ENCODE measurements at regions of chr5 and their contacts with region 1.

Region 1: DNA sequence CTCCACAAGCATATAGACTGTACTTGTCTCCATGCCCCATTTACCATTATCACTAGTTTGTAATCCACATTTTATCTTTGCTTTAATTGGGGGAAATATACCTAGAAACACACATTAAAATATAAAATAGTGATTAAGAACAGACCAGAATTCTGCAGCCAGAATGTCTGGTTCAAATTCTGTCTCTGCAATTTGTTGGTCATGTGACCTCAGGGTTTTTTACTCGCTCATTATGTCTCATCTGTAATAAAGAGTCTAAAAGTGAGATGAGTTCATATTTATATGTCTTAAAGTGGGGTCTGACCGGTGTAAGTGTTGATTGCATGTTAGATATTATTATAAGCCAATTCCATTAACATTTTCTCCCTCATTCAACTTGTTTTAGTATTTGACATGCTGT is 322.3 kb upstream of the CDH18 start:
- DNase-seq: no peak
- H3K4me3 ChIP-seq: no peak overlapping the region
- H3K27ac ChIP-seq: no peak overlapping the region
- H3K4me1 ChIP-seq: no peaks in the 10 kb centered on the region
- H3K27me3 ChIP-seq: no peaks in the 10 kb centered on the region
- CTCF ChIP-seq: no peak
- POLR2A ChIP-seq: no peak

Region 2: GRCh38 chr5:20032896-20033295 is 277.4 kb before region 1 on chr5:
- intact Hi-C with region 1: no loop called
- DNase-seq: no peak
- H3K4me3 ChIP-seq: no peak overlapping the region
- H3K27ac ChIP-seq: no peak overlapping the region
- H3K4me1 ChIP-seq: no peaks in the 10 kb centered on the region
- H3K27me3 ChIP-seq: no peaks in the 10 kb centered on the region
- CTCF ChIP-seq: no peak
- POLR2A ChIP-seq: no peak

Region 3: GRCh38 chr5:20335980-20336379 is 25.6 kb after region 1 on chr5:
- intact Hi-C with region 1: loop called (anchors 2 kb)
- DNase-seq: no peak
- H3K4me3 ChIP-seq: no peak overlapping the region
- H3K27ac ChIP-seq: no peak overlapping the region
- H3K4me1 ChIP-seq: no peaks in the 10 kb centered on the region
- H3K27me3 ChIP-seq: no peaks in the 10 kb centered on the region
- CTCF ChIP-seq: no peak
- POLR2A ChIP-seq: no peak